ENCODE measurements at regions of chr6 and their contacts with region 1.

Region 1: DNA sequence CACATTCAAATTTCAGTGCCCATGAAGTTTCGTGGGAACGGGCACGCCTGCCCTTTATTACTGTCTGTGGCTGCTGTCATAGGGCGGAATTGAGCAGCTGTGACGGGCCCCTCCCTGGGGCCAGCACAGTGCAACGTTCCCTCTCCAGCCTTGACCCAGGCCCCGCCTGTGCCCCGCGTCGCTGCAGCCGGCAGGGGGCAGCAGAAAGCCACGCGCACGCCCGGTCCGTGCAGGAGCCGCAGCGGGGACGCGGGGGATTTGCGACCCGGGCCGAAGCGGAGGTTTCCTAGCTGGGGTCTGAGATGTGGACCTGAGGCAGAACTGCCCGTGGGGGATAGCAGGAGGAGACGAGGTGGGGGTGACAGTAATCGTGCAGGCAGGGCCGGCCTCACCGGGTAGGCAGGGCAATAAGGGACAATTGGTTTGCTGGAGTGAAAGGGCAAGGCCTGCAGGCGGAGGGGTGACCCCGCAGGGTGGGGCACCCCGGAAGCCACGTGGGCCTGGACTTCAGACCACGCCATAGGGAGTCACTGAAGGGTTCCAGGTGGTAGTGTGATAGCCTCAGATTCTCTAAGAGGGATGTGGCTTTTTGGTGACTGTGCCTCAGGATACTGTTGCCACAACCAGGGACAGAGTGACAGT is 54.4 kb downstream of the SYTL3 start:
- DNase-seq: peak; percentile 86 to 90
- ATAC-seq: peak; percentile 88

Region 2: DNA sequence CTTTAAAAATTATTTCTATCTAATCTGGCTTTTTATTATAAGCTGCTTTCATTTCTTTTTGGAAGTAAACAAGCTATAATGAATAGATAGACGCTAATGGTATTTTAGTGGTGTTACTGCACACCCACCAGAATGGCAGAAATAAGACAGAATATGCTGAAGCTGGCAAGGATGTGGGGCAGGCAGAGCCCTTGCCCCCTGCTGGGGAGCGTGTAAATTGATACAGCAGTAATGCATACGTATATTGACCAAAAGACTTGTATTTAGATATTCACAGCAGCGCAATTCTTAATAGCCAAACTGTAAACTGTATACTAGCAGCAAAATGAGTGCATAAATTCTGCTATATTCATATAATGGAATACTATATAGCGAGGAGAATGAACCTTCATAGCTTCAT is 109.1 kb before region 1 on chr6:
- intact Hi-C with region 1: no loop called
- DNase-seq: no peak
- ATAC-seq: no peak

Region 3: GRCh38 chr6:158972241-158973233 is 268.2 kb after region 1 on chr6:
- intact Hi-C with region 1: loop called in 1 of 2 experiments (anchors 5 kb)
- DNase-seq: no peak
- ATAC-seq: peak; percentile 88